ENCODE measurements at regions of chr15 and their contacts with region 1.

Region 1: GRCh38 chr15:75367913-75368688 is at the start of gene MAN2C1:
- DNase-seq: peak; percentile 97
- ATAC-seq: peak; percentile 94
- H3K4me3 Mint-ChIP-seq: peak within 1 kb of the TSS; percentile 86
- H3K27ac Mint-ChIP-seq: peak within 1 kb of the TSS; percentile 95
- H3K4me1 Mint-ChIP-seq: peaks cover 26% of the 10 kb centered on the region
- H3K27me3 Mint-ChIP-seq: no peaks in the 10 kb centered on the region
- total RNA-seq, gene MAN2C1: 119 to 181 TPM

Region 2: DNA sequence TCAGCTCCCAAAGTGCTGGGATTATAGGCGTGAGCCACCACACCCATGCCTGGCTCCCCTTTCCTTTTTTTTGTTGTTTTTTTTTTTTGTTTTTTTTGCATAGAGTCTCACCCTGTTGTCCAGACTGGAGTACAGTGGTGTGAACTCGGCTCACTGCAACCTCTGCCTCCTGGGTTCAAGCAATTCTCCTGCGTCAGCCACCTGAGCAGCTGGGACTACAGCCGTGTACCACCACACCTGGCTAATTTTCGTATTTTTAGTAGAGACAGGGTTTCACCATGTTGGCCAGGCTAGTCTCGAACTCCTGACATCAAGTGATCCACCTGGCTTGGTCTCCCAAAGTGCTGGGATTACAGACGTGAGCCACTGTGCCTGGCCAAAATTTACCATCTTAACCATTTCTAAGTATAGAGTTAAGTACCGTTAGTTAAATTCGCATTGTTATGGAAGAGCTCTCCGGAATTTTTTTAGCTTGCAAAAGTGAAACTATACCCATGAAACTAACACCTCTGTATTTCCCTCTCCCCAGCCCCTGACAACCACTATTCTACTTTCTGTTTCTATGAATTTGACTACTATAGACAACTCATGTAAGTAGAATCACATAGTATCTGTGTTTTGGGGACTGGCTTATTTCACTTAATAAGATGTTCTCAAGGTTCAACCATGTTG is 237.4 kb before region 1 on chr15:
- CTCF ChIA-PET with region 1: no interaction called
- POLR2A ChIA-PET with region 1: no interaction called
- intact Hi-C with region 1: no loop called
- DNase-seq: no peak
- ATAC-seq: peak; percentile 99
- H3K4me3 Mint-ChIP-seq: peak overlapping the region; percentile 23
- H3K27ac Mint-ChIP-seq: no peak overlapping the region
- H3K4me1 Mint-ChIP-seq: peaks cover 15% of the 10 kb centered on the region
- H3K27me3 Mint-ChIP-seq: peaks cover 15% of the 10 kb centered on the region

Region 3: DNA sequence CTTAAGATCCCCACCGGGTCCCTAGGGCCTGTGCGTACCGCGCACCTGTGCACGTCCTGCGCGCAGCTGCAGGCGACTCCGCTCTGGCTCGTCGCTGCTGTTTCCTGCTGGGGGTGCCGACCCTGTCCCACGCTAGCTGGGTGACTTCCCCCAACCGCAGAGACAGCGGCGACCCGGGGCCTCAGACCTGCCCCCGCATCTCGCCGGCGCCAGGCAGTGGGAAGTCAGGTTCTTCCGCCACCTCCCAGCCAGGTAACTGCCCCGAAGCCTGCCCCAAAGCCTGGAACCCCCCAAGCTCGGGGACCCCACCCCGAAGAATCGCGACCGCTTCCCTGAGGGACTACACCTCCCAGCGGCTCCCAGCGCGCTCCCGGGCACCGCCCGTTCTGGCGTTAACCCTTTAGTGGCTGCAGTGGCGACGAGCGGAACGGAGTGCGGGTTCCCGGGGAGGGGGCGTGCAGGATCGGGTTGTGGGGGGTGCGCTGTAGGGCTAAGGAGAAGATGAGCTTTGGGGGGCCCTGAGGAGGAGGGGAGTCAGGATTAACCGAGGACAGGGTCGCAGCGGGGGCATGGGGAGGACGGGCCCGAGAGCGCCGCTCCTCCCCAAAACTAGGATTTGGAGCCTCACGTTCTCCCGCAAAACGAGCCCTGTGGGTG is 20.8 kb before region 1 on chr15:
- CTCF ChIA-PET with region 1: interaction called, 4 read pairs
- POLR2A ChIA-PET with region 1: interaction called, 8 read pairs
- intact Hi-C with region 1: loop called in 1 of 2 experiments (anchors 1 kb)
- DNase-seq: peak; percentile 72
- ATAC-seq: peak; percentile 57
- H3K4me3 Mint-ChIP-seq: peak overlapping the region; percentile 70
- H3K27ac Mint-ChIP-seq: peak overlapping the region; percentile 5
- H3K4me1 Mint-ChIP-seq: peaks cover 32% of the 10 kb centered on the region
- H3K27me3 Mint-ChIP-seq: peaks cover 5% of the 10 kb centered on the region

Region 4: GRCh38 chr15:75380773-75381172 is 12.7 kb after region 1 on chr15:
- CTCF ChIA-PET with region 1: interaction called, 12 read pairs
- POLR2A ChIA-PET with region 1: interaction called, 3 read pairs
- intact Hi-C with region 1: no loop called
- DNase-seq: no peak
- ATAC-seq: no peak
- H3K4me3 Mint-ChIP-seq: no peak overlapping the region
- H3K27ac Mint-ChIP-seq: peak overlapping the region; percentile 66
- H3K4me1 Mint-ChIP-seq: peaks cover 4% of the 10 kb centered on the region
- H3K27me3 Mint-ChIP-seq: no peaks in the 10 kb centered on the region

Region 5: GRCh38 chr15:75597667-75598341 is 229.7 kb after region 1 on chr15:
- CTCF ChIA-PET with region 1: no interaction called
- POLR2A ChIA-PET with region 1: no interaction called
- intact Hi-C with region 1: no loop called
- DNase-seq: peak; percentile 64
- ATAC-seq: peak; percentile 75
- H3K4me3 Mint-ChIP-seq: no peak overlapping the region
- H3K27ac Mint-ChIP-seq: peak overlapping the region; percentile 85
- H3K4me1 Mint-ChIP-seq: peaks cover 25% of the 10 kb centered on the region
- H3K27me3 Mint-ChIP-seq: no peaks in the 10 kb centered on the region

Region 6: GRCh38 chr15:75625542-75626347 is 257.6 kb after region 1 on chr15 and contains the start of gene SNUPN:
- CTCF ChIA-PET with region 1: interaction called, 9 read pairs
- POLR2A ChIA-PET with region 1: interaction called, 10 read pairs
- intact Hi-C with region 1: loop called (anchors 1 kb)
- DNase-seq: peak; percentile 97
- ATAC-seq: peak; percentile 88
- H3K4me3 Mint-ChIP-seq: peak within 1 kb of the TSS; percentile 93
- H3K27ac Mint-ChIP-seq: peak within 1 kb of the TSS; percentile 99
- H3K4me1 Mint-ChIP-seq: peaks cover 45% of the 10 kb centered on the region
- H3K27me3 Mint-ChIP-seq: no peaks in the 10 kb centered on the region
- total RNA-seq, gene SNUPN: 37.4 to 40.3 TPM

Region 7: DNA sequence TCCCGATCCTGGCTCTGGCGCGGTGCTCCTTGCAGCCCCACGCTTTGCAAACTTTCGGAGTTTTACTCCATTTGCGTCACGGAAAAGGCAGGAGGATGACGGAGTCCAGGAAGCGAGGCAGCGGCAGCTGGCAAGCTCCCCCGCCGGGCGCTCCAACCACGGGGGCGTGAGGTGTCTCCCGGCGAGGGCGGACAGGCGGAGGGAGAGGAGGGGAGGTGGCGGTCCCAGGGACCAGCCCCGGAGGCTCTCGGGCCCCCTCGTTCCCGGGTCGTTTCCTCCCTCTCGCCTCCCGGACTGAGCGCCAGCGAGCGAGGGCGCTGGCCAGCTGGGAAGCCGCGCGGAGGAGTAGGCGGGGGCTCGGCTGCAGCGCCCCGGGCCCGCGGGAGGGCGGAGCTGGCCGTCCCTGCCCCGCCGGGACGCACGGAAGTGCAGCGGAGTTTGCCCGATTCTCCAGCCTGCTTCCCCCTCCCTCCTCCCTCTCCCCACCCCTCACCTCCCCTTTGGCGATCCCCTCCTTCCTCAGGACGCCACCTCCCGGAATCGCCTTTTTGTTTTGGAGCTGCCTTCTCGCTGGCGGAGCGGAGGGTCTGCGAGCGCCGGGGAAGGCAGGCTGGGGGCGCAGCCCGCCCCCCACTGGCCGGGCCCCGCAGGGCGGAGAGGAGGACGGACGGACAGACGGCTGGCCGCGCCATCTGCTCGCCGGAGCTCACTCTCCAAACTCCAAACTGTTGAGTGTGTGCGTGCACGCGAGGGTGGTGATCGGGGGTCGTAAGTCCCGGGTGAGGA is 279.5 kb after region 1 on chr15 and contains the start of gene SNX33:
- CTCF ChIA-PET with region 1: interaction called, 37 read pairs
- POLR2A ChIA-PET with region 1: no interaction called
- intact Hi-C with region 1: no loop called
- DNase-seq: peak; percentile 78
- ATAC-seq: peak; percentile 65
- H3K4me3 Mint-ChIP-seq: peak within 1 kb of the TSS; percentile 76
- H3K27ac Mint-ChIP-seq: peak within 1 kb of the TSS; percentile 58
- H3K4me1 Mint-ChIP-seq: peaks cover 20% of the 10 kb centered on the region
- H3K27me3 Mint-ChIP-seq: no peaks in the 10 kb centered on the region
- total RNA-seq, gene SNX33: 2.2 to 2.4 TPM

Region 8: GRCh38 chr15:75903331-75904239 is 535.5 kb after region 1 on chr15 and contains the start of gene FBXO22:
- CTCF ChIA-PET with region 1: no interaction called
- POLR2A ChIA-PET with region 1: no interaction called
- intact Hi-C with region 1: loop called in 1 of 2 experiments (anchors 1 kb)
- DNase-seq: peak; percentile 97
- ATAC-seq: peak; percentile 97
- H3K4me3 Mint-ChIP-seq: peak within 1 kb of the TSS; percentile 97
- H3K27ac Mint-ChIP-seq: peak within 1 kb of the TSS; percentile 98
- H3K4me1 Mint-ChIP-seq: peaks cover 40% of the 10 kb centered on the region
- H3K27me3 Mint-ChIP-seq: no peaks in the 10 kb centered on the region
- total RNA-seq, gene FBXO22: 51.4 to 59.2 TPM